ENCODE measurements at regions of chr14 and their contacts with region 1.

Region 1: GRCh38 chr14:92559486-92559885 is 45.9 kb downstream of the RIN3 start:
- DNase-seq: no peak
- ATAC-seq: no peak

Region 2: GRCh38 chr14:91893007-91893406 is 666.5 kb before region 1 on chr14:
- intact Hi-C with region 1: no loop called
- DNase-seq: no peak
- ATAC-seq: no peak

Region 3: DNA sequence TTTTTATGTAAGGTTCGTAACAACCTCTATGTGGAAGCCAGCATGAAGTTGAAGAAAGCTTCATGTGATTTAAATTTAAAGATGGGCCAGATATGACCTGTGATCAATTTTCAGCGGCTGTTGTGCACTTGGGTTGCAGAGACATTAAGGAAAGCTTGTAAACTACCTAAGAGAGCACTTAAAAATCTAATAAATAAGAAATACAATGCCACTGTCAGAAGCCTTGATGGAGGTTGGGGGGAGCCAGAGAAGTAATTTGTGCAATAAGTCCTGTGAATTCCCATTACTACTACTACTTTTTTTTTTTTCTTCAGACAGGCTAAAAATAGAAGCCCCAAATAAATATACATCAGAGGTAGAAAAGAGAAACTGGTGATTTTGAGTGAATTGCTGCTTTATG is 266.8 kb before region 1 on chr14:
- intact Hi-C with region 1: no loop called
- DNase-seq: no peak
- ATAC-seq: no peak

Region 4: GRCh38 chr14:92471919-92472318 is 87.6 kb before region 1 on chr14:
- intact Hi-C with region 1: loop called (anchors 1 kb)
- DNase-seq: no peak
- ATAC-seq: no peak